GM12878 (cell line): ENCODE measurements at regions of chr20 and their contacts with region 1.

Region 1: DNA sequence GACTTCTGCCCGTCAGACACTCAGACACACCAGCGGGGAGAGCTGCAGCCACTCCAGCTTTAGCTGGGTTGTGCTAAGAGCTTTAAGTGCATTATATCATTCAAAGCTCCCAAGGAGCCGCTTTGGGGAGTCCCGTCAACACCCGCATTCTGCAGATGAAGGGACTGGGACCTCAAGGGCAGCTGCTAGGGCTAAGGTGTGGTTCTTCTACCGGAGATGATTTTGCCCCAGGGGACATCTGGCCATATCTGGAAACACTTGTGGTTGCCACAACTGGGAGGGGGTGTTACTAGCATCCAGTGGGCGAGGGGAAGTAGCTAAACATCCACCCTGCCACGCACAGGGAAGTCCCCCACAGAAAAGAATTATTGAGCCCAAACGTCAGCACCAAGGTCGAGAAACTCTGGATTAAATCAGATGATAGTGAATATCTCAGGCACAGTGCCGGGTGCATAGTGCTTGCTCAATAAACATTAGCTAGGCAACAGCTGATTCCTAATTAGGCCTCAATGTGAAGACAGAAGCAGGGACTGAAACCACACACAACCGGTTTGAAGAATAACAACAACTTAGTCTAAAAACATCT is 29.6 kb downstream of the PMEPA1 start:
- DNase-seq: peak; percentile 86
- ATAC-seq: peak; percentile 77
- H3K4me3 ChIP-seq: peak overlapping the region; percentile 19; the same call in 1 of the 2 replicates
- H3K27ac ChIP-seq: peak overlapping the region; percentile 80
- H3K4me1 ChIP-seq: peaks cover 66% of the 10 kb centered on the region
- H3K27me3 ChIP-seq: no peaks in the 10 kb centered on the region
- CTCF ChIP-seq: no peak
- EP300 ChIP-seq: peak; percentile 94 to 95
- POLR2A ChIP-seq: no peak
- RAD21 ChIP-seq: no peak

Region 2: GRCh38 chr20:57709931-57710799 is 29.9 kb after region 1 on chr20 and contains the start of gene PMEPA1:
- CTCF ChIA-PET with region 1: interaction called, 3 read pairs
- POLR2A ChIA-PET with region 1: no interaction called
- RAD21 ChIA-PET with region 1: no interaction called
- SMC1A ChIA-PET with region 1: no interaction called
- in situ Hi-C with region 1: no loop called
- intact Hi-C with region 1: loop called (anchors 1 kb)
- DNase-seq: no peak
- ATAC-seq: peak; percentile 90
- H3K4me3 ChIP-seq: peak within 1 kb of the TSS; percentile 72
- H3K27ac ChIP-seq: no peak within 1 kb of the TSS
- H3K4me1 ChIP-seq: no peaks in the 10 kb centered on the region
- H3K27me3 ChIP-seq: peaks cover 7 to 11% of the 10 kb centered on the region in 2 experiments
- CTCF ChIP-seq: no peak
- EP300 ChIP-seq: no peak
- POLR2A ChIP-seq: no peak; the same call in 1 of the 2 replicates
- RAD21 ChIP-seq: no peak
- polyA plus RNA-seq, gene PMEPA1: 0.02 TPM in 1 of 2 experiments, not detected in the other

Region 3: DNA sequence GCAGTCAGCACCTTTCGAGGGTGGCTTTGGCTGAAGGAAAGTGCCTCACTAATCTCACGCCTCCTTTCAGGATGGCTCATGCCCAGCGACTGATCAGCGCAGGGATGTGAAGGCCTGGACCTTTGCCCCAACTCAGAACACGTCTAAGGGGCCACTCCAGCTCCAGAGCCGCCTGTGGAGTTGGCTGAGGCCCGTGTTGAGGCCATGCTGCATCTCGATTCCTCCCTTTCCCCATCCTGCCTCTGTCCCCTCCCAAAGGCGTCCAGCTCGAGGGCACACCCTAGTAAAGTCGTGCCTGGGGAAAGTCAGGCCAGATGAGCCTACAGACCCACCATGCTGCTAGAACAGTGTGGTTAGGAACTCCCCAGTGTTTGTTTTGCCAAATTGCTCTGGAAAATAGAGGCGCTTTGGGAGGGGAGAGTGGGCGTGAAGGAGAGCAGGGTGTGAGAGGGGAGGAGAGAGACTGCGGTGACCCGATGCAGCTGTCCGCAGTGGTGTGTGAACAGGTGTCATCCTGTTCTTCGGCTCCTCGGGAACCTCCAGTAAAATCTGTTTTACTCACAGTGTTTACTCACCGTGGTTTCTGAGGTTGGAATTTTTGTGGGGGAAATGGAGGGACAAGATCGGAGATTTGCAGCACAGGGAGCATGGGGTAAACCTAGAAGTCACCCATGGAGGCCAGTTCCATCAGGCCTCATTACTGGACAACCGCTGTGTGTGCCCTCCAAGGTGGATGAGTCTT is 114.5 kb after region 1 on chr20:
- CTCF ChIA-PET with region 1: no interaction called
- POLR2A ChIA-PET with region 1: no interaction called
- RAD21 ChIA-PET with region 1: no interaction called
- SMC1A ChIA-PET with region 1: no interaction called
- in situ Hi-C with region 1: no loop called
- intact Hi-C with region 1: no loop called
- DNase-seq: no peak
- ATAC-seq: no peak
- H3K4me3 ChIP-seq: no peak overlapping the region
- H3K27ac ChIP-seq: no peak overlapping the region
- H3K4me1 ChIP-seq: no peaks in the 10 kb centered on the region
- H3K27me3 ChIP-seq: peaks cover 0 to 4% of the 10 kb centered on the region in 2 experiments; a peak in 2 of 4 replicates
- CTCF ChIP-seq: no peak
- EP300 ChIP-seq: no peak
- POLR2A ChIP-seq: no peak
- RAD21 ChIP-seq: no peak